ENCODE measurements at regions of chr14 and their contacts with region 1.

Region 1: DNA sequence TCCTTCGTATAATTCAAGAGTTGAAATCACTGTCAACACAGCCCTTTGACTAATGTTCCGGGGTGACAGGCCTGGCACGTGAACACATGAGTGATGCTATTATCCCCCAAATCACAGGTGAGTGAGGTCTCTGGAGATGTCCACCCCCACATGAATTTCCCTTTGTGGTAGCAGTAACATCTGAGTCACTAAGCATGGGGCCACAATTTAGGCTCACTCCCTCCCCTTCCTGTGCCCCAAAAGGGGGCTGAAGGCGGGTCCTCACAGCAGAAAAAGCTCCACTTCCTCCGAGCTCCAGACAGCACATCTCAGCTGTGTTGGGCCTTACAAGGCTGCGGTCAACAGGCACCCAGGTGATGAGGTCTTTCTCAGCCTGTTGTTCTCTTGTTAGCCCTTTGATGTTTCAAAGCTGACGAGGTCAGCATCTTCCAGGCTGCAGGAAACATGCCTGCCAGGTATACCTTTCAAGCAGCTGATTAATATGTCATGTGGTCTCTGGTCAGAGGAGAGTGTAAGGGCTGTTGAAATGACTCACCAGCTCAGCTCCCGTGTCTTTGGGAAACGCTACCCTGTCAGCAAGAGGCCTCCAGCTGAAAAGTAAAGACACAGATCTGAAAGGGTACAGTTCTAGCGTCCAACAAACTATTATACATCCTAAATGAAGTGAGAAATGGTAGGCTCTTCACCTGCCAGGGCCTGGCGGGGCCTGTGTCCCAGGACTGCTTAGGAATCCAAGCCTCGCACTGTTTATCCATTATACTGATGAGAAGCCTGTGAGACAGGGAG is 107.3 kb downstream of the ZFP36L1 start:
- DNase-seq: peak; percentile 83 to 89 (median 88)
- H3K4me3 ChIP-seq: no peak overlapping the region
- H3K4me3 Mint-ChIP-seq: peak overlapping the region; percentile 24 to 46
- H3K27ac ChIP-seq: peak overlapping the region; percentile 99 to 100
- H3K27ac Mint-ChIP-seq: peak overlapping the region; percentile 100
- H3K4me1 ChIP-seq: peaks cover 72 to 79% of the 10 kb centered on the region in 2 donors
- H3K4me1 Mint-ChIP-seq: peaks cover 75% of the 10 kb centered on the region
- H3K27me3 ChIP-seq: no peaks in the 10 kb centered on the region
- H3K27me3 Mint-ChIP-seq: peaks cover 0 to 4% (median 1%) of the 10 kb centered on the region in 3 donors
- CTCF ChIP-seq: no peak

Region 2: GRCh38 chr14:66813636-66814035 is 1872.0 kb before region 1 on chr14:
- intact Hi-C with region 1: no loop called
- DNase-seq: no peak
- H3K4me3 ChIP-seq: no peak overlapping the region
- H3K4me3 Mint-ChIP-seq: no peak overlapping the region
- H3K27ac ChIP-seq: no peak overlapping the region
- H3K27ac Mint-ChIP-seq: no peak overlapping the region
- H3K4me1 ChIP-seq: no peaks in the 10 kb centered on the region
- H3K4me1 Mint-ChIP-seq: no peaks in the 10 kb centered on the region
- H3K27me3 ChIP-seq: no peaks in the 10 kb centered on the region
- H3K27me3 Mint-ChIP-seq: peaks cover 0 to 3% (median 0%) of the 10 kb centered on the region in 3 donors
- CTCF ChIP-seq: no peak

Region 3: DNA sequence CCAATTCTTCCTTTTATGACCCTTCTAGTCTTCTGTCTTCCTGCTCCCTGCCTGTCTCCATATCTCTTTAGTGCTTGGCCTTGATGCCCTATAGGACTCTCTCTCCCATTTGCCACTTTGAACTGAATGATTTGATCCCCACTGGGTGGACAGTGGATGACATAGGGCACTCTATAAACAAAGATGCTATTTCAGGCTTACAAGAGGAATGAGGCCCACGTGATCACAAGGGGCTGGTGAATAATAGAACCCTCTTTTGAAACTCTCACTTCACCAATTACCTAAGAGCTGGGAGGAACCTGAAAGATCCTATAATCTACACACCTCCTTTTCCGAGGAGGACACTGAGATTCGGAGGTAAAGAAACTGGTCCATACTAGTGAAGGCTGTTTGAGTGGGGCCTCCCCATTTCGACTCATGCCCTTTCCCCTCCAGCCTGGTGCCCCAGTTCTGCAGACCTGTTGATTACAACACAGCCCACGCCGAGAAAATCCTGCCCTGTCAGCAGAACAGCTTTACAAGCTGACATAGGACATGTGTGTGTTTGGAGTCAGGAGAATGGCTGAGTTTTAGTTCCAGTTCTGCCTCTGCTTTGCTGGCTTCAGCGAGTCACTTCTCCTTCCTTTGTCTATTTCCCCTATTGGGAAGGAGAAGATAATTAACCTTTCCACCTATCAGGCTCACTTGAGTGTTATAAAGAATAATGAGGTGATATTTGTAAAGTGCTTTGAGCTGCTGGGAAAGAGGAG is 293.0 kb before region 1 on chr14:
- intact Hi-C with region 1: loop called in 1 of 2 experiments (anchors 10 kb)
- DNase-seq: peak; percentile 82 to 88 (median 87)
- H3K4me3 ChIP-seq: peak overlapping the region in 1 of 3 experiments; percentile 45
- H3K4me3 Mint-ChIP-seq: peak overlapping the region in 1 of 2 donors; percentile 68
- H3K27ac ChIP-seq: peak overlapping the region; percentile 81 to 83
- H3K27ac Mint-ChIP-seq: peak overlapping the region; percentile 83 to 99 (median 95)
- H3K4me1 ChIP-seq: peaks cover 57 to 65% of the 10 kb centered on the region in 2 donors
- H3K4me1 Mint-ChIP-seq: peaks cover 65% of the 10 kb centered on the region
- H3K27me3 ChIP-seq: no peaks in the 10 kb centered on the region
- H3K27me3 Mint-ChIP-seq: no peaks in the 10 kb centered on the region
- CTCF ChIP-seq: no peak

Region 4: DNA sequence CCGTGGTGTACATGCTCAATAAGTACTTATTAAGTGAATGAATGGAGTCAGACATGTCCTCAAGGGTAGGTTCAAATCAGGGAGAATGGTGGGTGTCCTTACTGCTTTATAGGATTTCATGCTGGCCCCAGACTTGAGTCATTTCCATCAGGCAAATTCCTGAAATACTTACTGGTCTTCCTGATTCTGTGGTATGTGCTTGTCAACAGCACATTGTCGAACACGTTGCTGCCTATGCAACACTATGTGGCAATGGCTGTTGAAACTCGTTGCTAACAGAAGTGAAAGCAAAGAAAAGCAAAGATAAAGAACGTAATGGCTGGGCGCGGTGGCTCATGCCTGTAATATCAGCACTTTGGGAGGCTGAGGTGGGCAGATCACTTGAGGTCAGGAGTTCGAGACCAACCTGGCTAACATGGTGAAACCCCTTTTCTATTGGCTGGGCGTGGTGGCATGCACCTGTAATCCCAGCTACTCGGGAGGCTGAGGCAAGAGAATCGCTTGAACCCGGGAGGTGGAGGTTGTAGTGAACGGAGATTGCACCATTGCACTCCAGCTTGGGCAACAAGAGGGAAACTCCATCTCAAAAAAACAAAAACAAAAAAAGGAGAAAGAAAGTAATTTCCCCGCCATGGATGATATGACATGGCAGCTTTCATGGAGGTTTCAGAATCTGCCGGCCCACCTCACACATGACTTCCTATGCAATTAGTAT is 107.6 kb before region 1 on chr14:
- intact Hi-C with region 1: loop called in 1 of 2 experiments (anchors 5 kb)
- DNase-seq: peak; percentile 94 to 99 (median 97)
- H3K4me3 ChIP-seq: peak overlapping the region in 1 of 3 experiments; percentile 2
- H3K4me3 Mint-ChIP-seq: peak overlapping the region; percentile 64 to 85
- H3K27ac ChIP-seq: peak overlapping the region; percentile 89 to 92
- H3K27ac Mint-ChIP-seq: peak overlapping the region; percentile 99 to 100 (median 100)
- H3K4me1 ChIP-seq: peaks cover 65 to 68% of the 10 kb centered on the region in 2 donors
- H3K4me1 Mint-ChIP-seq: peaks cover 68% of the 10 kb centered on the region
- H3K27me3 ChIP-seq: no peaks in the 10 kb centered on the region
- H3K27me3 Mint-ChIP-seq: peaks cover 0 to 2% (median 2%) of the 10 kb centered on the region in 3 donors
- CTCF ChIP-seq: no peak

Region 5: DNA sequence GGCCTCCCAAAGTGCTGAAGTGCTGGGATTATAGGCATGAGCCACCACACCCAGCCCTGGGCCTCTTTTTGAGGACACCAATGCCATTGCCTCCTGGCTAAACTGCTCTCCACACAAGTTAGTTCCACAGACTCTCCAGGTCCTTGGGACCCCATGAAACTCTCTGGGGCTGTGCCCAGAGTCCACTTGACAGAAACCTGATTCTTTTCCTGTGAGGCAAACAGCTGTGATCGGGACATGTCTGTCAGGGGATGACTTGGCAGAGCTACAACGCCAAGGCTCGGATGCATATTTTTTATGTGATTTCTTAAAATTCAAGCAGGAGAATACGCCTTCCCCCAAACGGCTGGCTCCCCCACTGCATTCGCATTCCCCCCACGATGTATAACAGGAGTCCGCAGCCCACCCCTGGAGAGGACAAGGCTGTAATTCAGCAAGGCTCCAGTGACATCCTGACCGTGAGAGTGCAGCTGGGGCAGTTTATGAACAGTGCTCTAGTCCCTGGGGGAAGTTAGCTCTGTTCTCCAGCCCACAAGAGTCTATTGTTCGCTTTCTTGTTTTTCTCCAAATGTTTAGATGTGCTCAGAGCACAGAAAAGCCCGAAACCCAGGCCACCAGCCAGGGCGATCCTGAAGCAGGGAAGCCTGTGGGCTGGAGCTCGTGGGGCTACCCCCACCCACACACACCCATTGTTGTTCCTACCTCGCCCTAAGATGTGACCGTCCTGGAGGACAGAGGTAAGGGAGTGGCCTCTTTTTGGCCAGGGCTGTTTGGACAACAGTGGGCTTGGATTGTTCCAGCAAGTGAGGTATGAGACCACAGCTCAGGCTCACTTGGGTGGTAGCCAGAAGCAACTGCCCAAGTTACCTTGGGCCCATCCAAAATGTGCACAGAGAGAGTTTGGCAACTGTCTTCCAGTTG is 52.3 kb before region 1 on chr14:
- intact Hi-C with region 1: no loop called
- DNase-seq: peak in 1 of 3 donors; percentile 24
- H3K4me3 ChIP-seq: no peak overlapping the region
- H3K4me3 Mint-ChIP-seq: peak overlapping the region in 1 of 2 donors; percentile 23
- H3K27ac ChIP-seq: no peak overlapping the region
- H3K27ac Mint-ChIP-seq: peak overlapping the region in 1 of 7 donors; percentile 74
- H3K4me1 ChIP-seq: peaks cover 32% of the 10 kb centered on the region in 2 donors
- H3K4me1 Mint-ChIP-seq: peaks cover 21% of the 10 kb centered on the region
- H3K27me3 ChIP-seq: peaks cover 0 to 7% of the 10 kb centered on the region in 2 donors
- H3K27me3 Mint-ChIP-seq: peaks cover 10 to 24% (median 23%) of the 10 kb centered on the region in 3 donors
- CTCF ChIP-seq: no peak

Region 6: GRCh38 chr14:68718023-68718995 is 32.7 kb after region 1 on chr14:
- intact Hi-C with region 1: loop called in 1 of 2 experiments (anchors 5 kb)
- DNase-seq: peak; percentile 37 to 62 (median 46)
- H3K4me3 ChIP-seq: no peak overlapping the region
- H3K4me3 Mint-ChIP-seq: peak overlapping the region in 1 of 2 donors; percentile 59
- H3K27ac ChIP-seq: no peak overlapping the region
- H3K27ac Mint-ChIP-seq: peak overlapping the region in 1 of 7 donors; percentile 57
- H3K4me1 ChIP-seq: peaks cover 16 to 32% of the 10 kb centered on the region in 2 donors
- H3K4me1 Mint-ChIP-seq: peaks cover 35% of the 10 kb centered on the region
- H3K27me3 ChIP-seq: peaks cover 6 to 21% of the 10 kb centered on the region in 2 donors
- H3K27me3 Mint-ChIP-seq: peaks cover 22 to 27% (median 24%) of the 10 kb centered on the region in 3 donors
- CTCF ChIP-seq: peak; percentile 85

Region 7: GRCh38 chr14:68741839-68742470 is 56.3 kb after region 1 on chr14:
- intact Hi-C with region 1: loop called (anchors 2 to 5 kb)
- DNase-seq: peak; percentile 95 to 99 (median 98)
- H3K4me3 ChIP-seq: peak overlapping the region in 1 of 3 experiments; percentile 12
- H3K4me3 Mint-ChIP-seq: peak overlapping the region in 1 of 2 donors; percentile 65
- H3K27ac ChIP-seq: peak overlapping the region; percentile 37 to 74
- H3K27ac Mint-ChIP-seq: peak overlapping the region; percentile 81 to 95 (median 91)
- H3K4me1 ChIP-seq: peaks cover 29% of the 10 kb centered on the region in 2 donors
- H3K4me1 Mint-ChIP-seq: peaks cover 38% of the 10 kb centered on the region
- H3K27me3 ChIP-seq: peaks cover 66 to 79% of the 10 kb centered on the region in 2 donors
- H3K27me3 Mint-ChIP-seq: peaks cover 79 to 84% (median 82%) of the 10 kb centered on the region in 3 donors
- CTCF ChIP-seq: no peak

Region 8: GRCh38 chr14:68874746-68875155 is 189.1 kb after region 1 on chr14:
- intact Hi-C with region 1: no loop called
- DNase-seq: peak in 1 of 3 donors; percentile 6
- H3K4me3 ChIP-seq: peak overlapping the region in 2 of 3 experiments; percentile 20 to 55
- H3K4me3 Mint-ChIP-seq: peak overlapping the region; percentile 24 to 56
- H3K27ac ChIP-seq: no peak overlapping the region
- H3K27ac Mint-ChIP-seq: no peak overlapping the region
- H3K4me1 ChIP-seq: no peaks in the 10 kb centered on the region
- H3K4me1 Mint-ChIP-seq: no peaks in the 10 kb centered on the region
- H3K27me3 ChIP-seq: no peaks in the 10 kb centered on the region
- H3K27me3 Mint-ChIP-seq: peaks cover 0 to 1% (median 0%) of the 10 kb centered on the region in 3 donors
- CTCF ChIP-seq: no peak

Region 9: GRCh38 chr14:68926236-68926635 is 240.6 kb after region 1 on chr14:
- intact Hi-C with region 1: loop called in 1 of 2 experiments (anchors 10 kb)
- DNase-seq: no peak
- H3K4me3 ChIP-seq: no peak overlapping the region
- H3K4me3 Mint-ChIP-seq: no peak overlapping the region
- H3K27ac ChIP-seq: peak overlapping the region in 1 of 2 donors; percentile 95
- H3K27ac Mint-ChIP-seq: peak overlapping the region in 6 of 7 donors; percentile 57 to 97 (median 86)
- H3K4me1 ChIP-seq: peaks cover 66 to 83% of the 10 kb centered on the region in 2 donors
- H3K4me1 Mint-ChIP-seq: peaks cover 87% of the 10 kb centered on the region
- H3K27me3 ChIP-seq: no peaks in the 10 kb centered on the region
- H3K27me3 Mint-ChIP-seq: no peaks in the 10 kb centered on the region
- CTCF ChIP-seq: peak; percentile 68